ENCODE measurements at regions of chr17 and their contacts with region 1.

Region 1: GRCh38 chr17:69898601-69899000 is 176.4 kb upstream of the KCNJ16 start:
- DNase-seq: no peak
- ATAC-seq: no peak
- H3K4me3 ChIP-seq: no peak overlapping the region
- H3K27ac ChIP-seq: no peak overlapping the region
- H3K4me1 ChIP-seq: peaks cover 0 to 12% (median 2%) of the 10 kb centered on the region in 12 donors
- H3K27me3 ChIP-seq: no peaks in the 10 kb centered on the region
- CTCF ChIP-seq: no peak
- POLR2A ChIP-seq: no peak

Region 2: DNA sequence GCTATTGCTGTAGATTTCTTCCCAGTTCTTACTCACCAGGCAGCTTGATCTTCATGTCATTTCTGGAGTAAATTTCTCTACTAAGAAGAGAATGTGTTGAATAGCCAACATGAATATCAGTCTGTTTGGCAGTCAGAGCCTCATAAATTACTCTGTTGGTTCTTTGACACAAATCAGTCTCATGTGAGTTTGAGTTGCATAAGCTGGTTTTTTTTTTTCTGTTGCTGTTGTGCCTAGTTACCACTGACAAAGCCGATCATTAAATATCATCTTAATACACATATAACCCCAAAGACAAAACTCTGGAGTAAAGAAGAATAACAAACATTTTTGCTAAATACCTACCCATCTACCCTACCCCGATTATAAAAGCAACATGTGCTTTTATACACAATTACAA is 64.1 kb before region 1 on chr17:
- intact Hi-C with region 1: loop called in 1 of 10 experiments (anchors 10 kb)
- DNase-seq: no peak
- ATAC-seq: no peak
- H3K4me3 ChIP-seq: no peak overlapping the region
- H3K27ac ChIP-seq: no peak overlapping the region
- H3K4me1 ChIP-seq: no peaks in the 10 kb centered on the region
- H3K27me3 ChIP-seq: no peaks in the 10 kb centered on the region
- CTCF ChIP-seq: no peak
- POLR2A ChIP-seq: no peak

Region 3: GRCh38 chr17:69949973-69950695 is 51.5 kb after region 1 on chr17:
- intact Hi-C with region 1: loop called in 2 of 10 experiments (anchors 10 kb)
- DNase-seq: no peak
- ATAC-seq: peak in 1 of 4 donors; percentile 34
- H3K4me3 ChIP-seq: no peak overlapping the region
- H3K27ac ChIP-seq: no peak overlapping the region
- H3K4me1 ChIP-seq: peaks cover 0 to 15% (median 10%) of the 10 kb centered on the region in 12 donors
- H3K27me3 ChIP-seq: no peaks in the 10 kb centered on the region
- CTCF ChIP-seq: no peak
- POLR2A ChIP-seq: no peak

Measured in heart left ventricle (tissue), 16 donors.